Activated CD4-positive, alpha-beta T cell treated with anti-CD3 and anti-CD28 coated beads for 36 hours (primary cell): ENCODE measurements at regions of chrX and their contacts with region 1.

Region 1: DNA sequence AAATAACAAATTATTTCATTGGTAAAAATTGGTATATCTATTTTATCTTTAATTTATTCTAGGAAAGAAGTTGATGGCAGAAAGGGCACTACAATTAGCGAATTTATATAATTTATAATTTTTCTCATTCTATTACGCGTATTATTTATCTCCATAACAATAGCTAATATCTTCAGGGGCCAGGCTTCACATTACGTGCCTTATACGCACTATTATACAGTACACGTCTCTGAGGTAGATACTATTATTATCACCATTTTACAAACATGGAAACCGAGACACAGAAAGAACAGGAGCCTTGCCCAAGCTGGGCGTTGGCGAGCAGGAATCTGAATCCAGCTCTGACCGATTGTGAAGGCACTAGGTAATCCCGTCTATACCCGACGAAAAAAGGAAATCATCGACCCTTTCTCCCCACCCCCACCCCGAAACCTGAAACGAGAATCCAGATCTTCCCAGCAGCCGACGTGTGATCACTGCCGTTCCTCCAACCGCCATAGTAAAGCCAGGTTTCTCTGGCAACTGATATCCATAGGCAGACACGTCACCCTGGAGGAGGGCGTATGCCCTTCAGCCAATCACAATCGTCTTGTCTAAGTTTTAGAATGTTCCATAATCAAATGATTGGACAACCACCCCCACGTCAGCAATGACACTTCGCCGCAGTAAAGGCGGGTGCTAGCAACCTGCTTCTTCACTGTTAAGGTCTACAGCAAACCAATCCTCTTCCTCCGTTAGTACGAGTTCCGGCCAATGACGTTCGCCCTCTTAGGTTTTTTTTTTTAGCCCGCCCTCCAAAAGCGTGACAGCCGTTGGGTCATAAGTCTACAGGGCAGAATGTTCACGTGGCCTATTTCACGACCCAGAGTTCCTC is at the start of gene MORF4L2:
- DNase-seq: peak; percentile 91
- ATAC-seq: peak; percentile 91
- H3K4me3 Mint-ChIP-seq: no peak within 1 kb of the TSS
- H3K27ac Mint-ChIP-seq: peak within 1 kb of the TSS; percentile 94
- H3K4me1 Mint-ChIP-seq: peaks cover 9% of the 10 kb centered on the region
- H3K27me3 Mint-ChIP-seq: no peaks in the 10 kb centered on the region
- total RNA-seq, gene MORF4L2: 239 to 257 TPM

Region 2: DNA sequence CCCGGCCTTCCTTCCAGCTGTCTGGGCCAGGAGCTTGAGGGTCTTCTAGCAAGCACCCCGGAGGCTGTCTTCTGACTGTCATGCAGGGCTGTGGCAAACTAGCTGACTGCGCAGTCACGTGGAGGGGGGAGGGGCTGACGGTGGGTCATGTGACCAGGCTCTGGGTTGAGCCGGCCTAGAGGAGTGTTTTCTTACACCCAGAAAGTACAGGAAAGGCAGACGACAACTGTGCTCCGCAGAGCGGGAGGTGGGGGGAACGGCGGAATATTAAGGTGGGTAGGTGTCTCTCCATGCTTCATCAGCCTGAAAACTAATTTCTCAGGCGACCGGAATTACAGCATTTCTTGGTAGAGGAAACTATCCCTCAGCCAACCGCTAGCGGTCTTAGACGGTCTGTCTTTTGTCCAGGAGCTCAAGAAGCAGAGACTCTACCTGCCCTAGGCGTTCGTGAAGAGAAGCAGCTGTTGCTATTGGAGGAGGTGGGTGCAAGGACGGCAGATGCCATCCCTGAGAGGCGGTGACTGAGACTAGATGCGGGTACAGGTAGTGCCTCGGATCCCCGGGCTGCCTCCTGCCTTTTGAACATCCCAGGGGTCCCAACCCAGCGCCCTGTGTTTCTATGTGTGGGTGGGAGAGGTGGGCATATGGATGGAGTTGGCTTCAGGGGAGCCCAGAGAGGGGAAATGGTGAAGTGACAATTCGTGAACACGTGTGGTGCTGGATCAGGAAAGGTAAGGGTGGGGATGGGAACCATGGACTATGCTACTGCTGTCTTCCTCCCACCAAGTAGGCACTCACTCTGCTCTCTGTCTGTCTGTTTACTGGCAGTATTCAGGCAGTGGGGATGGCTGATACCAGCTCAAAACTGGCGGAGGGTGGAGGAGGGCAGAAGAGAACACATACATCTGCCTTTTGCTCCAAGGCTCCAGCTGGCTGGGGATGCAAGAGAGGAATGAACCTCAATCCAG is 1026.4 kb before region 1 on chrX:
- CTCF ChIA-PET with region 1: no interaction called
- POLR2A ChIA-PET with region 1: no interaction called
- intact Hi-C with region 1: loop called in 1 of 2 experiments (anchors 10 kb)
- DNase-seq: peak; percentile 91
- ATAC-seq: peak; percentile 99
- H3K4me3 Mint-ChIP-seq: peak overlapping the region; percentile 87
- H3K27ac Mint-ChIP-seq: peak overlapping the region; percentile 92
- H3K4me1 Mint-ChIP-seq: peaks cover 23% of the 10 kb centered on the region
- H3K27me3 Mint-ChIP-seq: no peaks in the 10 kb centered on the region

Region 3: DNA sequence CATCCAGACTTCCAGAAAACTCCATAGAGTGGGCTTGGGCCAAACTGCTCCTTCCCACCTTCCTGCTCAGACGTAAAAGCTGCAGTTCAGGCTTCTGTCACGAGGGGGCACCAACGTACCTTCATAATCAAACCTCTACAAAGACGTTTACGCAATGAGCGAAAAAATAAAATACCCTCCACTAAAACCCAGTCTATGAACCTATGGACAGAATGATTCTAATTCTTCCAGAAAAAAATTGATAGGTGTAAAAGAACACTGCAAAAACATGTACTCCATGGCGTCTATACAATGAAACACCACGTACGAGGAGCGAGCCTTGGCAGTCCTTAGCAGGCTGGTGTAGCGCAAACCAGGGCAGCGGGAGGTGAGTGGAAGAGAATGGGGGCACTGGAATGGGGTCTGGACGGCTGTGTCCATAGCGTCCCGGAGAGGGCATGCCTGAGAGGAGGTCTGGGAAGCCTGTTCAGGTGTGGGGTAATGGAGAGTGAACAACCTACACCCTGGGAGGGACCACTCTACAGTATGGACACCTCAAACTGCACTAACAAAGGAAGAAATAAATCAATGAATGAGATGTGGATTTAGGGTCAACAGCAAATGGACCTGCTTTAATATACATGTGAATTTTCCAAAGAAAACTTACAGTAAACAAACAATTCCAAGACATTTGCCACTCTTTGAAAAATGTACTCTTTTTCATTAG is 152.8 kb before region 1 on chrX:
- CTCF ChIA-PET with region 1: no interaction called
- POLR2A ChIA-PET with region 1: no interaction called
- intact Hi-C with region 1: loop called (anchors 2 to 5 kb)
- DNase-seq: peak; percentile 77
- ATAC-seq: peak; percentile 64
- H3K4me3 Mint-ChIP-seq: peak overlapping the region; percentile 30
- H3K27ac Mint-ChIP-seq: no peak overlapping the region
- H3K4me1 Mint-ChIP-seq: peaks cover 2% of the 10 kb centered on the region
- H3K27me3 Mint-ChIP-seq: no peaks in the 10 kb centered on the region

Region 4: DNA sequence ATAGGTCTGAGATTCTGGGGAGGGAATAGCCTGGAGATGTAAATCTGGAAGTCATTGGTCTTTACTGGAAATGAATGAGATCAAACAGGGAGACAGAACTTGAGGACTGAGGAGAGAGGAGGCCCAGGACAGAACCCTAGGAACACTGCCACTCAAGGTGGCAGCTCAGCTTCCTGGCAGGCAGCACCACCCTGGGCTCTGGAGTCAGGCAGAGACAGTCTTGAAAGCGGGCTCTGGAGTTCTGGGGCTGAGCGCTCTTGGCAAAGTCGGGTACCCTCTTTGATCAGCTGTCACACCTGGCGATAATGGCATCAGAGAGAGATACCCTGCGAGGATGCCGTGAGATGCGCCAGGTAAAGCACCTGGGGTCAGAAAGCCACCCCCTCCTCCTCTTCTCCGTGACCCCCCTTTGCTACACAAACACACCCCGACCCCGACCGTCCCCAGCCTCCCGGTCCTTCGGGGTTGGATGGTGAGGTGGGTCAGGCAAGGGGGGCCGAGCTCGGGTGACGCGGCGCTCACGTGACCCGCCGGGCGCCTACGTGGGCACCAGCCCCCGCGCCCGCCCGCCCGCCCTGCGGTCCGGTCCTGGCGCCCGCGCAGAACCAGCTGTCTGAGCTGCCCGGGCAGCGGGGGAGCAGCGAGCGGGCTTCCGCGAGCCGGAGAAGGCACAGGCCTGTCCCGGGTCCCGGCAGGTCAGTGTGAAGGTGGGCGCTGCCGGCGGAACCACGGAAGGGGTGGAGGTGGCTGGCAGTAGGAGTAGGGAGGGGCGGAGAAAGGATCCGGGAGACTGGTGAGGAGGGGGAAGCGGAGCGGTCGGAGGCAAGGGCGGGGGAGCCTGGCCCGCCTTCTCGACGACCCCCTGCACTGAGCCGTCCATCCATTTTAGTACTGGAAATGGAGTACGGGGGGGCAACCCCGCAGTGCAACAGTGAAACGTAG is 78.8 kb before region 1 on chrX and contains the start of gene TCEAL3:
- CTCF ChIA-PET with region 1: no interaction called
- POLR2A ChIA-PET with region 1: no interaction called
- intact Hi-C with region 1: loop called in 1 of 2 experiments (anchors 5 kb)
- DNase-seq: peak; percentile 30
- ATAC-seq: peak; percentile 73
- H3K4me3 Mint-ChIP-seq: peak within 1 kb of the TSS; percentile 72
- H3K27ac Mint-ChIP-seq: peak within 1 kb of the TSS; percentile 47
- H3K4me1 Mint-ChIP-seq: peaks cover 2% of the 10 kb centered on the region
- H3K27me3 Mint-ChIP-seq: peaks cover 4% of the 10 kb centered on the region
- total RNA-seq, gene TCEAL3: 5.1 to 7.3 TPM

Region 5: DNA sequence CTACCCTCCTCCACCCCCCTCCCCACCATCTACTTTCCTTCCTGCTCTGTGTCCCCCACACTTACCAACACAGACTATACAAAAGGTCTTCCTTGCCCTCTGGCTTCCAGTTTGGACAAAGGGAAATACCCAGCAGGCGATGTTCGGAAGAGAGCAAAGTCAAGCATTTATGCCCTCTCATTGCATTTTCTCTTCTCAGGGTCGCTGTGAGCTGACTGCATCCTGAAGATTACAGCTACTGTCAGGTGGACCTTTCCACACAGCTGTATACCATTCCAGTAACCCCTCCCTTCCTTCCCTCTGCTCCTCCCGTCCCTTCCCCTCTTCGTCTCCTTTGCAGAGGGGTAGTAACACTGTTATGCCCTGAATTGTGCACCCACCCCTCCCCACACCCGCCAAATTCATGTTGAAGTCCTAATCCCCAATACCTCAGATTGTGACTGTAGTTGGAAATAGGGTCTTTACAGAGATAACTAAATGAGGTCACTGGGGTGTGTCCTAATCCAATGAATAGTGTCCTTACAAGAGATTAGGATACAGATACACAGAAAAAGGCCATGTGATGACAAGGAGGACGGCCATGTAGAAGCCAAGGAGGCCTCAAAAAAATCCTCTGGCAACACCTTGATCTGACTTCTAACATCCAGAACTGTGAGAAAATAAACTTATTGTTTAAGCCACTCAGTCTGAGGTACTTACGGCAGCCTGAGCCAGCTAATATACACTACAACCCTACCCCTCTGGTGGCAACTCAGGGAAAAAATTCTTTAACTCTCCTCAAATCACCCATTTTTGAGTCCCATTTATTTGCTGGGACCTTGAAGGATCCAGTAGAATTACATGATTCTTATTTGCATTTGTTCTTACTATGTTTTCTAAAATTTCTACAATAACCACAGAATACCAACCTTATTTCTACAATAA is 11.6 kb before region 1 on chrX:
- CTCF ChIA-PET with region 1: no interaction called
- POLR2A ChIA-PET with region 1: no interaction called
- intact Hi-C with region 1: no loop called
- DNase-seq: no peak
- ATAC-seq: no peak
- H3K4me3 Mint-ChIP-seq: no peak overlapping the region
- H3K27ac Mint-ChIP-seq: no peak overlapping the region
- H3K4me1 Mint-ChIP-seq: peaks cover 5% of the 10 kb centered on the region
- H3K27me3 Mint-ChIP-seq: no peaks in the 10 kb centered on the region

Region 6: DNA sequence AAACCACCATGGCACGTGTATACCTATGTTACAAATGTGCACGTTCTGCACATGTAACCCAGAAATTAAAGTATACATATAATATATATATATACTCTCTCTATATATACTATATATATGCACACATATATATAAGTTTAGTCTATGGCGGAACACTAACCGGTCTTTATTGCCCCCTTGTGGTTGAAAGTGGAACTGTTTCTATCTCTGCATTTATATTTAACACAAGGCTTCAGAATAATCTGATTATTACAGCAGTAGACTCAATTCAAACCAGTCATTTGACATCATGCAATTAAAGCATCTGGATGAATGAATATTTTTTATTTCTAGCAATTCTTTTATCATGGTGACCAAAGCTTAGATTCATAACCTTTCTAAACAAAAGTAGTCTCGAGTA is 131.1 kb after region 1 on chrX:
- CTCF ChIA-PET with region 1: interaction called, 4 read pairs
- POLR2A ChIA-PET with region 1: no interaction called
- intact Hi-C with region 1: loop called (anchors 1 kb)
- DNase-seq: no peak
- ATAC-seq: peak; percentile 63
- H3K4me3 Mint-ChIP-seq: no peak overlapping the region
- H3K27ac Mint-ChIP-seq: no peak overlapping the region
- H3K4me1 Mint-ChIP-seq: no peaks in the 10 kb centered on the region
- H3K27me3 Mint-ChIP-seq: peaks cover 12% of the 10 kb centered on the region

Region 7: GRCh38 chrX:103918581-103919269 is 232.3 kb after region 1 on chrX:
- CTCF ChIA-PET with region 1: no interaction called
- POLR2A ChIA-PET with region 1: no interaction called
- intact Hi-C with region 1: loop called (anchors 1 to 5 kb)
- DNase-seq: peak; percentile 82
- ATAC-seq: peak; percentile 89
- H3K4me3 Mint-ChIP-seq: peak overlapping the region; percentile 90
- H3K27ac Mint-ChIP-seq: peak overlapping the region; percentile 94
- H3K4me1 Mint-ChIP-seq: peaks cover 15% of the 10 kb centered on the region
- H3K27me3 Mint-ChIP-seq: no peaks in the 10 kb centered on the region